ENCODE measurements at regions of chr7 and their contacts with region 1.

Region 1: DNA sequence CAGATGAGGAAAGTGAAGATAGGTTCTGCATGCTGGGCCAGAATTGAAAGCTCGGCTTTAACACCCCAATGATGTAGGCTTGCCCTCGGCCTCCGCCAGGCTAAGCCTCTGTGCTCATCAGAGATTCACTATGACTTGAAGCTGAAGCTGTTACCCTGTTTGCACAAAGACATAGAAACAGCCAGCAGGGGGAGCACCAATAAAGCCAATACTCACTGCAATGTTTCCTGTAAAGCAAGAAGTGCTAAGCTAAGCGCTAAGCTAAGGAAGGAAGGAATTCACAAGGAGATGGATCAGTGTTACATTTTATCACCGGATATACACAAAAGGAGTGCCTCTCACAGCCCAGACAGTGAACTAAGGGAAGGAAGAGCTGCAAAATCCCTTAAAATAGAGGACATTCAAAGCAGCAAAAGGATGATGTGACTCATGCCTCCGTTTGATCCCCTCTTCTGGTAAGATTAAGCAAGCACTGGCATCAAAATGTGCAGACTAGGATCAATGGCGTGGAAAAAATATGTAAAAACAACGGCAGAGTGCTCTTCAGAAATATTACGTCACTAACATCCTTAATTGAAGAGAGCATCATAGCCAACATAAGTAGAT is 153.8 kb downstream of the COBL start:
- DNase-seq: peak; percentile 64
- ATAC-seq: peak; percentile 98
- H3K4me3 ChIP-seq: no peak overlapping the region
- H3K27ac ChIP-seq: no peak overlapping the region
- H3K4me1 ChIP-seq: no peaks in the 10 kb centered on the region
- H3K27me3 ChIP-seq: no peaks in the 10 kb centered on the region
- CTCF ChIP-seq: peak; percentile 89
- EP300 ChIP-seq: no peak
- POLR2A ChIP-seq: no peak
- RAD21 ChIP-seq: peak; percentile 28; the same call in 1 of the 2 replicates

Region 2: GRCh38 chr7:50092579-50093491 is 1070.0 kb before region 1 on chr7 and contains the start of gene ZPBP:
- CTCF ChIA-PET with region 1: interaction called, 3 read pairs
- POLR2A ChIA-PET with region 1: no interaction called
- in situ Hi-C with region 1: no loop called
- intact Hi-C with region 1: loop called (anchors 5 kb)
- DNase-seq: peak; percentile 18
- ATAC-seq: peak; percentile 50
- H3K4me3 ChIP-seq: no peak within 1 kb of the TSS
- H3K27ac ChIP-seq: no peak within 1 kb of the TSS
- H3K4me1 ChIP-seq: no peaks in the 10 kb centered on the region
- H3K27me3 ChIP-seq: no peaks in the 10 kb centered on the region
- CTCF ChIP-seq: peak; percentile 72
- EP300 ChIP-seq: no peak
- POLR2A ChIP-seq: no peak
- RAD21 ChIP-seq: peak; percentile 22; the same call in 1 of the 2 replicates
- total RNA-seq, gene ZPBP: not detected in 2 replicates

Region 3: DNA sequence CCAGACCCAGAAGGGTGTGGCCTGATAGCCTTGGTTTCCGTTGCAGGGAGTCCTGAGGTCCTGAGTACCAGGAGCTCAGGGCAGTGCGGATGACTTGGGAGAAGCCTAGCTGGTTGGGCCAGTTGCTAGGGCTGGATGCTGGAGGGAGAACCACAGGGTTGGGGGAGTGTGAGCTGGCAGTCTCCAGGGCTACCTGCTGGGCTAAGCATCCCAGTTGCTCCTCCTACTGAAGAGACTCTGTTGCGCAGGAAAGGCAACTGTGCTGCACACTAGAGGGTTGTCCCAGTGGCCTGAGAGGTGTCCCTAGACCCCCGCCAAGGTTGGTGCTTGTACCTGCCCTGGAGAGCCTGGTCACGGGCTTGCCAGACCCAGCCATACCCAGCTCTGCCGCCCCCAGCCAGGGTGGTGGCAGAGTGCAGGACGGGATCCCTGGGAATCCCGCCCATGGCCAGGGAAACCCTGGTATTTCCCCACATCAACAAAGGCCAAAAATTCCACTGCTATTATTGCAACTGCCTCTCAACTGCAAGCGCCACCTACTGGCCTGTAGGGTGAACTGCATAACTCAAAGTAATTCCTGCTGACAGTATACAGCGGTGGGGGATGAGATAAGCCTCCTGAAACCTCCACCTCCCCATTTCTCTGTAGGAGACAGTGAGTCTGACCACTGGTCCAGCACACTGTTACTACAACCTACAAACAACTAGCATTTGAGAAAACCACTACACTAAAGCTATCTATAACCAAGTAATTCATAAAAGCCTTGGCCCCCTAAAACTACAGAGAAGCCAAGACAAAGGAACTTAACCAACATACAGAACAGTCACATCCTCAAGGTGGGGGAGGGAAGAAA is 530.0 kb before region 1 on chr7:
- CTCF ChIA-PET with region 1: no interaction called
- POLR2A ChIA-PET with region 1: no interaction called
- in situ Hi-C with region 1: no loop called
- intact Hi-C with region 1: loop called (anchors 2 kb)
- DNase-seq: peak; percentile 70
- ATAC-seq: peak; percentile 85
- H3K4me3 ChIP-seq: no peak overlapping the region
- H3K27ac ChIP-seq: no peak overlapping the region
- H3K4me1 ChIP-seq: peaks cover 18% of the 10 kb centered on the region
- H3K27me3 ChIP-seq: no peaks in the 10 kb centered on the region
- CTCF ChIP-seq: peak; percentile 90
- EP300 ChIP-seq: no peak
- POLR2A ChIP-seq: no peak
- RAD21 ChIP-seq: peak; percentile 78

Region 4: DNA sequence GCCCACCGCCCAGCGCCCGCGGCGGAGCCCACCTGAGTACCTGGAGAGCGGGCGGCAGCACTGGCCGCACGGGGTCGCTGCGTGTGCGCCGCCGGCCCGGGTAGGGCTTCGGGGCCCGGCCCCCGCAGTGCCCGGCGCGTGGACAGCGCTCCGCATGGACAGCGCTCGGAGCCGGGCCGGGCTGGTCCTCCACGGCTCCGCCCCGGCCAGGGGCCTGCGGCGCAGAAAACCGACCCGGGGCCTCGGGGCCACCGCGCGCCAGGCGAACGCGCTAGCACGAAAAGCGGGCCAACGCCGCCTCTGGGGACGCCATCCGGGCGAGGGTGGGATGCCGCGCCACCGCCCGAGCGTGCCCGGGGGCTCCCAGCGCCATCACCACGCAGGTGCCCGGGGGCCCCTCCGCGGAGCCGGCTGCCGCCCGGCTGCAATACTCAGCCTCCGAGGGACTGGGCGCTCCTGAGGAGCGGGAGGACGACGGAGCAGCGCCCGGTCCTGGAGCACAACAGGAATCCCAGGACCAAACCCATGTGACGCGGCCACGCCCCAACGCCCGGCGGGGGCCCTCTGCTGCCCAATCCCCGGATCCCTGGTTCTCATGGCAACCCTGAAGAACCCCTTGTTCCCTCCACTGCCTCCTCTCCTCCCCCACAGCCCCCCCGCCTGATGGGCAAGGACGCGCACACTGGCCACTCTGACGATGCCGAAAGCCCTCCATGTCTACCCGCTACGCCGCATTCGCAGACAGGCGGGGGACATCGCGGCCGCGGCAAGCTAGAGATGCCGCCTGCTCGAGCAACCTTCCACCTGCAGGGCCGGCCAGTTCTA is 380.2 kb before region 1 on chr7 and contains the start of gene GRB10:
- CTCF ChIA-PET with region 1: no interaction called
- POLR2A ChIA-PET with region 1: no interaction called
- in situ Hi-C with region 1: no loop called
- intact Hi-C with region 1: loop called (anchors 5 kb)
- DNase-seq: no peak
- ATAC-seq: peak; percentile 84
- H3K4me3 ChIP-seq: peak within 1 kb of the TSS in 2 of 3 experiments; percentile 14 to 57; a peak in 2 of 6 replicates
- H3K27ac ChIP-seq: no peak within 1 kb of the TSS
- H3K4me1 ChIP-seq: peaks cover 42% of the 10 kb centered on the region
- H3K27me3 ChIP-seq: peaks cover 2 to 12% of the 10 kb centered on the region in 2 experiments; a peak in 2 of 5 replicates
- CTCF ChIP-seq: peak; percentile 36; the same call in 1 of the 2 replicates
- EP300 ChIP-seq: no peak
- POLR2A ChIP-seq: no peak
- RAD21 ChIP-seq: no peak; the same call in 1 of the 2 replicates
- total RNA-seq, gene GRB10: 6.8 and 8.3 TPM in 2 replicates

Region 5: DNA sequence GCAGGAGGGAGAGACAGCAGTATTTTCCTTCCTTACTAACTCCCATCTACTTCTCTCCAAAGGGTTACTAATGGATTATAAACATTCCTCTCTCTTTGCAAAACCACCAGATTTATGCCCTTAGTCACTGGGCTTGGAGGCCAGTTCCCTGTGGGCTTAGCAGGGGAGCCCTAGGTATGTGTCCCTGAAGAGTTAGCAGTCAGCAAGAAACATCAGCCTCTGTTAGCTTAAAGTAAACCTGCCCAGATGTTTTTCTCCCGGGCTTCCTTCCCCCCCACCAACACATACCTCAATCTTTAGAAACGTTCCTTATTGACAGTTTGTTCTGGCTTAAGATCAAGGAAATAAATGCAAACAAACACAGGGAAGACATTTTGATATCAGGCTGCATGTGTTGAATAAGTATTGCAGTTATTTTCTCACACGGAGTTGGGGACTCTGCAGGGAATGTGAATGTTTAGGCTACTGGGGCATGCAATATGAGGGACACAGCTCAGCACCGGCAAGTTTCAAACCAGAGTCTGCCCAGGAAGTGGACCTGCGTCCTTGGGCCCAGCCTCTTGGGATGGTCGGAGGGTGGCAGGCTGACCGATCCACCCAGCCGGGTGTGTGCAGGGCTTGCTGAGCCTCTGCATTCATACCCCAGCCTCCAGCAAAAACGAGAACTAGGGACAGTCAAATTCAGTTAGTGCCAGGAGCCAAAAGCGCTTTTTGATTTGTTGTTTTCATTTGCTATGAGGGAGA is 128.1 kb before region 1 on chr7:
- CTCF ChIA-PET with region 1: no interaction called
- POLR2A ChIA-PET with region 1: no interaction called
- in situ Hi-C with region 1: no loop called
- intact Hi-C with region 1: no loop called
- DNase-seq: no peak
- ATAC-seq: no peak
- H3K4me3 ChIP-seq: no peak overlapping the region
- H3K27ac ChIP-seq: no peak overlapping the region
- H3K4me1 ChIP-seq: no peaks in the 10 kb centered on the region
- H3K27me3 ChIP-seq: no peaks in the 10 kb centered on the region
- CTCF ChIP-seq: no peak
- EP300 ChIP-seq: no peak
- POLR2A ChIP-seq: no peak
- RAD21 ChIP-seq: no peak

Region 6: GRCh38 chr7:51366930-51367613 is 204.2 kb after region 1 on chr7:
- CTCF ChIA-PET with region 1: interaction called, 38 read pairs
- POLR2A ChIA-PET with region 1: interaction called, 7 read pairs
- in situ Hi-C with region 1: loop called (anchors 5 kb)
- intact Hi-C with region 1: loop called (anchors 1 kb)
- DNase-seq: peak; percentile 43
- ATAC-seq: peak; percentile 96
- H3K4me3 ChIP-seq: no peak overlapping the region
- H3K27ac ChIP-seq: no peak overlapping the region
- H3K4me1 ChIP-seq: peaks cover 16% of the 10 kb centered on the region; the same call in 1 of the 2 replicates
- H3K27me3 ChIP-seq: 0 out of 5 replicates have a peak, but pooled peaks cover 0 to 1% of the 10 kb centered on the region in 2 experiments
- CTCF ChIP-seq: peak; percentile 91
- EP300 ChIP-seq: no peak
- POLR2A ChIP-seq: no peak
- RAD21 ChIP-seq: peak; percentile 80